ENCODE measurements at regions of chrX and their contacts with region 1.

Region 1: GRCh38 chrX:153507484-153508178 is 9.8 kb upstream of the ATP2B3 start:
- DNase-seq: peak; percentile 83
- H3K4me3 ChIP-seq: no peak overlapping the region
- H3K27ac ChIP-seq: no peak overlapping the region
- H3K4me1 ChIP-seq: no peaks in the 10 kb centered on the region
- H3K27me3 ChIP-seq: no peaks in the 10 kb centered on the region
- CTCF ChIP-seq: peak; percentile 91

Region 2: DNA sequence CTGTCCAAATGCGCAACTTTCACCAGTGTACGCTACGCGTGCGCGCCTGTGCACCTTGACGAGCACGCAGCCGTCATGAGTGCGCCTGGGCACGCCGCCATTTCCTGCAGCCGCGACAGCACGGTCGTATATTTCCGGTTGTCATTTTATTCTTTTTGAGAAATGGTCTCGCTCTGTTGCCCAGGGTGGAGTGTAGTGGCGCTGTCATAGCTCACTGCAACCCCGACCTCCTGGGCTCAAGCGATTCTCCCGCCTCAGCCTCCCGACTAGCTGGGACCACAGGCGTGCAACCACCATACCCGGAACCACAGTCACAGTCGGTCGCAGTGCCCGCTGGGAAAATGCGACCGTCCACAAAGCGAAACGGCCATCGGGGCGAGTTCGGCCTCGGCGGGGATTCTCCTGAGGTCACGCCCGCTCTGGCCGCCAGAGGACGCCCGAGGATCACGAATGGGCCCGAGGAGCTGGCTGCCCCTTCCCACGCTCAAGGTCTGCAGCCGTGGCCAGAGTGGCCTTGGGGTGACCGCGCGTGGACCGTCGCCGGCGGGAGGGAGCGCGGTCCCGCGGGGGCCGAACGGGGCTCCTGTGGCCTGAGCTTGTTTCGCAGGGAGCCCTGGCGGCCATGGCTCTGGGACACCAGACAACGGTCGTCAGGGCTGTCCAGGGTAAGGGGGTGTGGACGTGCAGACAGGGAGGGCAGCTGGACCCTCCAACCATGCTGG is 475.1 kb before region 1 on chrX:
- CTCF ChIA-PET with region 1: no interaction called
- POLR2A ChIA-PET with region 1: no interaction called
- intact Hi-C with region 1: loop called (anchors 10 kb)
- DNase-seq: peak; percentile 60
- H3K4me3 ChIP-seq: peak overlapping the region; percentile 31
- H3K27ac ChIP-seq: no peak overlapping the region
- H3K4me1 ChIP-seq: no peaks in the 10 kb centered on the region
- H3K27me3 ChIP-seq: no peaks in the 10 kb centered on the region
- CTCF ChIP-seq: peak; percentile 79

Region 3: GRCh38 chrX:153460845-153461244 is 46.8 kb before region 1 on chrX:
- CTCF ChIA-PET with region 1: interaction called, 13 read pairs
- POLR2A ChIA-PET with region 1: no interaction called
- intact Hi-C with region 1: loop called (anchors 2 kb)
- DNase-seq: peak; percentile 61
- H3K4me3 ChIP-seq: no peak overlapping the region
- H3K27ac ChIP-seq: no peak overlapping the region
- H3K4me1 ChIP-seq: no peaks in the 10 kb centered on the region
- H3K27me3 ChIP-seq: no peaks in the 10 kb centered on the region
- CTCF ChIP-seq: peak; percentile 86

Region 4: DNA sequence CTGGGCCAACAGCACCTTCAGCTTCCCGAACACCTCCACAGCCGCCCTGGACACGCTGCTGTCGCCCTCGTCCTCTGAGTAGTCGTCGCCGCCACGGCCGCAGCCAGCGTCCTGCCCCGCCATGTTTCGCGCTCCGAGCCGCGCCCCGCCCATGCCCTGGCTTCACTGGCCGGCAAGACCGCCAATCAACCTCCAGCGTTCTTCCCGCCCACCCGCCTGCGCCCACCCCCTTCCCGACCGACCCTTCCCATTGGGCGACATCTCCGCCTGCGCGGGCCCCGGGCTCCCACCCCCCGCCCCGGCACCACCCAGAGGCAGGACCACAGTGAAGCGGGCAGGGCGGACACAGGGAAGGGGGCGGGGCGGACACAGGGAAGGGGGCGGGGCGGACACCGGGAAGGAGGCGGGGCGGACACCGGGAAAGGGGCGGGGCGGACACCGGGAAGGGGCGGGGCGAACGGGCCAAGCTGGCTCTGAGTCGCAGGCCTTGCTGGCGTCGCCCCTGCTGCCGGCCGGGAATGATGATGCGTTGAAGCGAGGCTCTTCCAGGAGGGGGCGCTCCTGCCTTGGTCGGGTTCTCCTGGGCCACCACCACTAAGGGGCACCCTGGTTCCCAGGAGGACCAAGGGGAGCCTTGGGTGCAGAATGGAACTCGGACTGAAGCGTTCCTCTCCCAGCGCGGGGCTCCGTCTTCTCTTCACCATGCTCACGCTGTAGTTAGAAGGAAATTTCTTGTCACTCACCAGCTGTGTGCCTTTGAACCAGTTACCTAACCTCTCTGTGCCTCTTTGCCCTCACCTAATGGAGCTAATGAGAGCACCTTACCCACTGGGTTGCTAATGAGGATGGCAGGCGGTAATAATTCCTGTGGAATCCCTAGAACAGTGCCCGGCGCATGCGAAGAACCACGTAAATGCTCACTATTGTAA is 36.9 kb before region 1 on chrX and contains the start of gene HAUS7:
- CTCF ChIA-PET with region 1: interaction called, 4 read pairs
- POLR2A ChIA-PET with region 1: no interaction called
- intact Hi-C with region 1: loop called (anchors 1 kb)
- DNase-seq: peak; percentile 93
- H3K4me3 ChIP-seq: peak within 1 kb of the TSS; percentile 59
- H3K27ac ChIP-seq: peak within 1 kb of the TSS; percentile 51
- H3K4me1 ChIP-seq: peaks cover 5% of the 10 kb centered on the region
- H3K27me3 ChIP-seq: no peaks in the 10 kb centered on the region
- CTCF ChIP-seq: peak; percentile 81
- total RNA-seq, gene HAUS7: 75.3 and 82.6 TPM in 2 replicates

Region 5: GRCh38 chrX:154142950-154143745 is 635.5 kb after region 1 on chrX:
- CTCF ChIA-PET with region 1: interaction called, 10 read pairs
- POLR2A ChIA-PET with region 1: no interaction called
- intact Hi-C with region 1: no loop called
- DNase-seq: no peak
- H3K4me3 ChIP-seq: no peak overlapping the region
- H3K27ac ChIP-seq: no peak overlapping the region
- H3K4me1 ChIP-seq: no peaks in the 10 kb centered on the region
- H3K27me3 ChIP-seq: no peaks in the 10 kb centered on the region
- CTCF ChIP-seq: no peak